ENCODE measurements at regions of chr1 and their contacts with region 1.

Region 1: GRCh38 chr1:70354332-70355110 is at the start of gene ANKRD13C:
- DNase-seq: peak; percentile 97
- H3K4me3 ChIP-seq: peak within 1 kb of the TSS; percentile 74 to 89 (median 82)
- H3K27ac ChIP-seq: peak within 1 kb of the TSS; percentile 92 to 95 (median 92)
- H3K4me1 ChIP-seq: peaks cover 0 to 49% (median 48%) of the 10 kb centered on the region in 4 donors
- H3K27me3 ChIP-seq: no peaks in the 10 kb centered on the region
- CTCF ChIP-seq: no peak
- EP300 ChIP-seq: no peak
- POLR2A ChIP-seq: peak; percentile 80 to 83
- total RNA-seq, gene ANKRD13C: 22.8 to 34.2 (median 28.5) TPM

Region 2: DNA sequence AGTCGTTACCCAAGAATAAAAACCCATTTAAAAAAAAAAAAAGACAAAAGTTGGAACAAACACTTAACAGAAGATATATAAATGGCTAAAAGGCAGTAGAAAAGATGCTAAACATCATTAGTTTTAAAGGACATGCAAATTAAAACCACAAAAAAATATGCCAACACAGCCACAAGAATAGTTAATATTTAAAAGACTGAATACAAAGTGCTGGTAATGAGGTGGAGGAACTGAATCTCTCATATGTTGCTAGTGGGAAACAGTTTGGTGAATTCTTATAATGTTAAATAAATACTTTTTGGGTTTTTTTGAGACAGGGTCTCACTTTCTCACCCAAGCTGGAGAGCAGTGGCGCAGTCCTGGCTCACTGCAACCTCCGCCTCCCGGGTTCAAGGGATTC is 159.2 kb before region 1 on chr1:
- intact Hi-C with region 1: no loop called
- DNase-seq: no peak
- H3K4me3 ChIP-seq: no peak overlapping the region
- H3K27ac ChIP-seq: no peak overlapping the region
- H3K4me1 ChIP-seq: no peaks in the 10 kb centered on the region
- H3K27me3 ChIP-seq: no peaks in the 10 kb centered on the region
- CTCF ChIP-seq: no peak
- EP300 ChIP-seq: no peak
- POLR2A ChIP-seq: no peak

Region 3: GRCh38 chr1:70205434-70206118 is 148.9 kb before region 1 on chr1 and contains the start of gene LRRC40:
- intact Hi-C with region 1: loop called (anchors 1 kb)
- DNase-seq: peak; percentile 95
- H3K4me3 ChIP-seq: peak within 1 kb of the TSS; percentile 60 to 86 (median 69)
- H3K27ac ChIP-seq: peak within 1 kb of the TSS; percentile 85 to 93 (median 90)
- H3K4me1 ChIP-seq: peaks cover 0 to 64% (median 54%) of the 10 kb centered on the region in 4 donors
- H3K27me3 ChIP-seq: no peaks in the 10 kb centered on the region
- CTCF ChIP-seq: no peak
- EP300 ChIP-seq: peak in 1 of 4 donors; percentile 39
- POLR2A ChIP-seq: peak; percentile 52 to 62
- total RNA-seq, gene LRRC40: 14.0 to 20.7 (median 16.6) TPM

Region 4: DNA sequence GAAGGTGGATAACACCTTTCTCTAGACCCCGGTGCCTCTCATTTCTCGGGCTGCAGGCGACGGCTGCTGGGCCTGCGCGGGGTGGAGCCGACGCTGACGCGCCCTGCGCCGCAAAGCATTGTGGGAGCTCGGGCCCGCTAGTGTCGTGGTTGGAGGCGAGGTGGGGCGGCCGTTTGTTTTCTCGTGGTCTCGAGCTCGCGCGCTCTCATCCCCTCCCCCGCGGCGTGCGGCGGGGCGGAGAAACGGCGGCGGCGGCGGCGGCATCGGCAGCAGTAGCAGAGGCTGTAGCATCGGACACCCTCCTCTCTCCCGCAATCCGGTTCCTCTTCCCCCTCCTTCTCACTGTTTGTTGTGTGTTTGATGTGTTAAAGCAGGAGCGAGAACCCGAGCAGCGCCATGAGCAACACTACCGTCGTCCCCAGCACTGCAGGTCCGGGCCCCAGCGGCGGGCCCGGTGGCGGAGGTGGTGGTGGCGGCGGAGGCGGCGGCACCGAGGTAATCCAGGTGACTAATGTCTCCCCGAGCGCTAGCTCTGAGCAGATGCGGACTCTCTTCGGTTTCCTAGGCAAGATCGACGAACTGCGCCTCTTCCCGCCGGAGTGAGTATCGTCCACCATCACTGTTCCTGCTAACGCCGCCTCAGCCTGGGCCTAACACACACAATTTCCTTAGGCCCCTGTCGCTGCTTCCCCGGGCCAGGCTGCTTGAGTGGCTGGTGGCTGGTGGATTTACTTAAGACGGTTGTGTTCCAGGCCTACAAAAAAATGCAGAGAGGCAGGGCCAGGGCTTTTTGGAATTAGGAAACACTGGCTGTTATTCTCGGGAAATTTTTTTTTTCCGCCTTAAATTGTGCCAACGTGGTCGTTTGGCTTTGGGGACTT is 133.0 kb before region 1 on chr1 and contains the start of gene SRSF11:
- intact Hi-C with region 1: loop called (anchors 2 kb)
- DNase-seq: peak; percentile 97
- H3K4me3 ChIP-seq: peak within 1 kb of the TSS; percentile 68 to 83 (median 73)
- H3K27ac ChIP-seq: peak within 1 kb of the TSS; percentile 87 to 97 (median 96)
- H3K4me1 ChIP-seq: peaks cover 0 to 53% (median 43%) of the 10 kb centered on the region in 4 donors
- H3K27me3 ChIP-seq: no peaks in the 10 kb centered on the region
- CTCF ChIP-seq: no peak
- EP300 ChIP-seq: peak in 1 of 4 donors; percentile 73
- POLR2A ChIP-seq: peak; percentile 49 to 69
- total RNA-seq, gene SRSF11: 156 to 248 (median 176) TPM

Region 5: DNA sequence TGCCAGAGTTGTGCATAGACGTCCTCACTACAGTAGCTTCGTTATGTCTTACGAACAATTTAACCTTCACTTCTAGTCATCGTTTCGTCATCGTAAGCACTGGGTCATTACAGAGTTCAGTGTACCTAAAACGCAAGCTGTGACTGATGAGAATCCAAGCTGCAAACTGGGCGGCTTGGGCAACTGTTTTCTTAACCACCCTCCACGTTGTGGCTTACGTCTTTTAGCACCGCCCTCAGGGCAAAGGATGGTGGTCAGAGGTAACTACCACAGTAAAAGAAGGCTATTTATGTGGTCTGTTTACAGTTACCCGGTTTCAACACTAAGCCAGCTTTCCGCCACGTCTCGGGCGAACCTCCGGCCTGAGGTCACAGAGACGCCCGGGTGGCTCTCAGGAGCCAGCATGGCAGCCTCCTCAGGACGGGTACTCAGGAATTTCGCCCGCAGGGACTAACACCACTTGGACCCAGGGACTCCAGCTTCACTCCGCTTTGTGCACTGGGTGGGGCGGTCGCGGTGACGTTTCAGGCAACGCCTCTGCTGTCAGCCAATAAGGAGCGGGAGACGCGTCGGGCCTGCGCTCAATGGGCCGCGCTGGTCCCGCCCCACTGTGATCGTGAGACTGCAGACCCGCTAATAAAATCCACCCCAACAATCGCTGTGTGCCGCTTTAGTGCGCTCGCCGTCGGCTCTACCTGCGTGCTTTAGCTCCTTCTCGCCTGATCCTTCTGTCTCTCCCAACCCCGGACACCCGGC is 56.3 kb after region 1 on chr1 and contains the start of gene CTH:
- intact Hi-C with region 1: loop called (anchors 1 kb)
- DNase-seq: peak; percentile 99
- H3K4me3 ChIP-seq: peak within 1 kb of the TSS; percentile 61 to 74 (median 68)
- H3K27ac ChIP-seq: peak within 1 kb of the TSS; percentile 91 to 96 (median 93)
- H3K4me1 ChIP-seq: peaks cover 0 to 20% (median 10%) of the 10 kb centered on the region in 4 donors
- H3K27me3 ChIP-seq: no peaks in the 10 kb centered on the region
- CTCF ChIP-seq: no peak
- EP300 ChIP-seq: peak in 2 of 4 donors; percentile 12 to 58
- POLR2A ChIP-seq: peak; percentile 74 to 88
- total RNA-seq, gene CTH: 1.1 to 4.6 (median 2.7) TPM

Region 6: DNA sequence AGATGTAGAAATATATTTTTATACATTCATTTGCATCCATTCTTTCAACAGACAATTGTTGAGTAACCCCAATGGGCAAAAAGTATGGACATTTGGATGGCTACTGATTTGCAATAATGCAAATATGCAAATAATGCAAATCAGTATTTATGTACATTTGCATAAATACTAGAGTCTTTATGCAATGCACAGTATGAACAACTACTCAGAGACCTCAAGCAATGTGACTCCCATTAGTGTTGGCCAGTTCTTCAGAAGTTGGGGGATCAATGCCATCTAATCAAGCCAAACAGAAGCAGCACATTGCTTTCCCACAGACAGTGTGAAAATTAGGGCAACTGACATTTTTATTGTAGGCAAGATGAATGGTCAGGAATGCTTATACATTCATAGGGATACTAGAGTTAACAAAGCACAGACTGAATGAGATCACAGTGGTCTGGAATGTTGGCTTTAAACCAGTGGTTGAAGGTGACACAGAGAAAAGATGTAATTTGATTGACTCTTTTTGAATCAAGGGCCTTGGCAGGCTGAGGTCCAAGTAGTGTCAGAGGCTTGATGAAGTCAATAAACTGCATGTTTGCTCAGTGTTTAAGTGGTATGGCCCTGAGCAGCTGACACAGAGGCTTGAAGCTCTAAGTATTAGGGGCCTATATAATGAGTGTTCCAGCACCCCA is 313.1 kb after region 1 on chr1:
- intact Hi-C with region 1: no loop called
- DNase-seq: no peak
- H3K4me3 ChIP-seq: no peak overlapping the region
- H3K27ac ChIP-seq: no peak overlapping the region
- H3K4me1 ChIP-seq: peaks cover 0 to 23% (median 10%) of the 10 kb centered on the region in 4 donors
- H3K27me3 ChIP-seq: no peaks in the 10 kb centered on the region
- CTCF ChIP-seq: no peak
- EP300 ChIP-seq: no peak
- POLR2A ChIP-seq: no peak